Left colon (tissue), 2 donors: ENCODE measurements at regions of chr9 and their contacts with region 1.

Region 1: GRCh38 chr9:133274236-133275104 is 531 bp downstream of the ABO start:
- DNase-seq: peak in 1 of 2 donors; percentile 28
- ATAC-seq: peak; percentile 20

Region 2: DNA sequence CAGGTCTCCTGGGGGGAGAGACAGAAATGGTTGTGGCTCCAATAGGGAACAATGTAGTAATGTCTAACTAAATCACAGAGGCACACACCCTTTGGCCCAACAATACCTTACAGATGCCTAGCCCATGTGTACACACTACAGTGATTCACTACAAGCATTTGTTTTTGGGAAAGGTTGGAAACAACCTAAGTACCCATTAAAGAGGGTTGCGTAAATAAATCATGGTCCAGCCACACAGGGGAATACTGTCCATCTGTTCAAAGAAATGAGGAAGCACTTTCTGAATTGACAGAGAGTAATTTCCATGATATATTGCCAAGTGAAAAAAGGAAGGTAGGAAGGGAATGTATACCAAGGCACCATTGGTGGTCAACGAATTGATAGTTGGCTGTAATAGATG is 265.6 kb before region 1 on chr9:
- intact Hi-C with region 1: no loop called
- DNase-seq: no peak
- ATAC-seq: peak; percentile 83

Region 3: DNA sequence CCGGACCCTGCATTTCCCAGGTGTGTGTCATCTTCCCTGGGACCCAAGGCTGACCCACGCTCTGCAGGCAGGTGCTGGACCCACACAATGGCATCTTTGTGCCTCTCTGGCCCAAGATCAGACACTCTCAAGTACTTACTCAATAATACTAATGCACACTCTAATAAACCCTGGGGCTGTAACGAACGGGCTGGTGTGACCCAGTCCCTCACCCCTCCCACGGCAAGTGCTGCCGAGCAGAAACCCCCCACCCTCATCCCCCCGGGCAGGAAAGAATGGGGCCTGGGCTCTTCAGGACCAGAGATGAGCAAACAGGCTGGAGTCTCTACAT is 64.3 kb before region 1 on chr9:
- intact Hi-C with region 1: loop called in 1 of 2 experiments (anchors 5 kb)
- DNase-seq: no peak
- ATAC-seq: no peak